ENCODE measurements at regions of chr9 and their contacts with region 1.

Region 1: DNA sequence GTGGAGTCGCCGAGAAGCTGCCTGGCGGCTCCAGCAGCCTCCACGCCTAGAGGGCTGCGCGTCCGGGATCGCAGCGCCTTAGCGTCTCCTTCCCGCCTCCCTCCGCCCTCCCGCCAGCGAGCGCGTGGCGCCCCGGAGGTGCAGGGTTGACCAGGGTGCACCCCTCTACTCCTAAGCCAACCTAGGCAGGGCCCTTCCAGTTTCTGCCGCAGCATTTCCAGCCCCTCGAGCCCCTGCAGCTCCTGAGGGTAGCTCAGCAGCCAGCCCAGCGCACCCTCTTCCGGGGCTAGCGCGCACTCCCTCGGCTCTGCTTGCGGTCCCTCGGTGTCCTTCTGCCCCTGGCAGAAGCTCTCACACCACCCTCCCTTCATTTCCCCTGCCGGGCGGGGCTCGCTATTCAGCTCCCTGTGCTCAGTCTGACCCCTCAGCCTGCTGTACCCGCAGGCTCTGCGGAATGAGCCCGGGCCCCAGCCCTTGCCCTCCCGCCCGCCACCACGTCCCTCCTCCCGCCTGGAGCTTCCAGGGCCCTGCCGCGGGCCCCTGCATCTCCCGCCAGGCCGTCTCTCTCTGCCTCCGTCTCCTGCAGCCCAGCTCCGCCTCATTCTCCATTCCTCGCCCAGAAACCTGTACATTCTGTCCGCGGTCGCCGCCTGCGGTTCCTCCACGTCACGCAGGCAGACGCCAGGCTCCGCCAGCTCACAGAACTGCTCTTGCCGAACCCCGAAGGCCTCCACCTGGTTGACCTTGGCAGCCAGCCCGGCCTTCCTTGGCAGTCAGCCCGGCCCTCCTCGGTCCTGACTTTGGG is 61.8 kb downstream of the SPATA31C2 start:
- H3K4me3 ChIP-seq: peak overlapping the region; percentile 57
- H3K27ac ChIP-seq: peak overlapping the region; percentile 80
- H3K4me1 ChIP-seq: peaks cover 6% of the 10 kb centered on the region; the same call in 1 of the 2 replicates
- CTCF ChIP-seq: peak; percentile 59

Region 2: DNA sequence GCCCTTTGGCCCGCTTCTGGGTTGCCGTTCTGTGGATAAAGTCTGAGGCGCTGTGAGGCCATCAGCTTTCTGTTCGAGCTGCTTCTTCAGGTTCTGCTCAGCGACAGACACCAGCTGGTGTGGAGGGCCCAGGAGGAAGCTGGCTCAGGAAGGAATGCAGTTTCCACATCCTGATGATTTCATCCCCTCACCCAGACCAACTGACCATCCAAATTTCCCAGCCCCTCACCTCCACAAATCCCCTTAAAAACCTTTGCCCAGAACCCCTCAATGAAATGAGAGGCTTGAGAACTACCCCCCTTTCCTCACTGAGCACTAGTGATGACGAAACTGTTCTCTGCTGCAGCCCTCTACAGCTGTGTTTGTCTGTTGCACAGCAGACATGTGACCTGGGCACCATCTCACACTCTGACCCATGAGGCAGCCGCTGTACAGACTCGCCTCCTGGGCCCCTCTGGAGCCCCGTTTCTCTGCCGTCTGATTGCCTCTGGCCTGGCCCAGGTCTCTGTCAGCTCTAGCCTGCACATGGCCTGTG is 16.4 kb after region 1 on chr9:
- CTCF ChIA-PET with region 1: interaction called, 5 read pairs
- POLR2A ChIA-PET with region 1: interaction called, 39 read pairs
- H3K4me3 ChIP-seq: no peak overlapping the region
- H3K27ac ChIP-seq: no peak overlapping the region
- H3K4me1 ChIP-seq: 0 out of 2 replicates have a peak, but pooled peaks cover 2% of the 10 kb centered on the region
- CTCF ChIP-seq: no peak